PC-9 (cell line): ENCODE measurements at regions of chr13 and their contacts with region 1.

Region 1: GRCh38 chr13:96958286-96958891 is 35.9 kb downstream of the OXGR1 start:
- DNase-seq: no peak
- H3K4me3 ChIP-seq: no peak overlapping the region
- H3K27ac ChIP-seq: no peak overlapping the region
- H3K4me1 ChIP-seq: no peaks in the 10 kb centered on the region
- H3K27me3 ChIP-seq: no peaks in the 10 kb centered on the region; the same call in 1 of the 2 replicates
- CTCF ChIP-seq: peak; percentile 86

Region 2: GRCh38 chr13:95246292-95247082 is 1711.9 kb before region 1 on chr13:
- CTCF ChIA-PET with region 1: interaction called, 17 read pairs
- POLR2A ChIA-PET with region 1: no interaction called
- intact Hi-C with region 1: no loop called
- DNase-seq: peak; percentile 47 to 95
- H3K4me3 ChIP-seq: no peak overlapping the region
- H3K27ac ChIP-seq: no peak overlapping the region
- H3K4me1 ChIP-seq: peaks cover 29% of the 10 kb centered on the region
- H3K27me3 ChIP-seq: no peaks in the 10 kb centered on the region
- CTCF ChIP-seq: no peak

Region 3: GRCh38 chr13:96020155-96020575 is 938.2 kb before region 1 on chr13:
- CTCF ChIA-PET with region 1: no interaction called
- POLR2A ChIA-PET with region 1: no interaction called
- intact Hi-C with region 1: loop called (anchors 5 kb)
- DNase-seq: peak; percentile 19 to 59
- H3K4me3 ChIP-seq: no peak overlapping the region
- H3K27ac ChIP-seq: no peak overlapping the region
- H3K4me1 ChIP-seq: no peaks in the 10 kb centered on the region
- H3K27me3 ChIP-seq: no peaks in the 10 kb centered on the region
- CTCF ChIP-seq: peak; percentile 86

Region 4: GRCh38 chr13:96636001-96636709 is 322.2 kb before region 1 on chr13:
- CTCF ChIA-PET with region 1: no interaction called
- POLR2A ChIA-PET with region 1: no interaction called
- intact Hi-C with region 1: no loop called
- DNase-seq: no peak
- H3K4me3 ChIP-seq: no peak overlapping the region
- H3K27ac ChIP-seq: no peak overlapping the region
- H3K4me1 ChIP-seq: no peaks in the 10 kb centered on the region
- H3K27me3 ChIP-seq: no peaks in the 10 kb centered on the region
- CTCF ChIP-seq: no peak

Region 5: DNA sequence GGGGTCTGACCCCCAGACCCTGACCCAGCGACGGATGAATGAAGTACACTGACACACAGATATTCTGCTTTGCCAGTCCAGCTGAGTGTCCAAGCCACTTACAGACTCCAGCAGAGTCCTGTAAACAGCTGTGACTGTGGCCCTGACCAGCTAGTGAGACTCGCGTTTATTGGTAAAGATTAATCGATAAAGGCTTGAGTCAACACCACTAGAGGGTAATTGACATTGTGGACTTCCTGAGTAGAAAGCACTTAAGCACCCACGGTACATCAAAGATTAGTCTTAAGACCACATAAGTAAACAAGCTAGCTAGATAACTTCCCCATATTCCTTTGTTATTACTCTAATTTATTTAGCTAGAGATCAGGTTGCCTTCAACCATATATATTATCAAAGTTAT is 110.1 kb before region 1 on chr13:
- CTCF ChIA-PET with region 1: interaction called, 20 read pairs
- POLR2A ChIA-PET with region 1: no interaction called
- intact Hi-C with region 1: no loop called
- DNase-seq: no peak
- H3K4me3 ChIP-seq: no peak overlapping the region
- H3K27ac ChIP-seq: no peak overlapping the region
- H3K4me1 ChIP-seq: no peaks in the 10 kb centered on the region
- H3K27me3 ChIP-seq: peaks cover 26% of the 10 kb centered on the region
- CTCF ChIP-seq: no peak

Region 6: DNA sequence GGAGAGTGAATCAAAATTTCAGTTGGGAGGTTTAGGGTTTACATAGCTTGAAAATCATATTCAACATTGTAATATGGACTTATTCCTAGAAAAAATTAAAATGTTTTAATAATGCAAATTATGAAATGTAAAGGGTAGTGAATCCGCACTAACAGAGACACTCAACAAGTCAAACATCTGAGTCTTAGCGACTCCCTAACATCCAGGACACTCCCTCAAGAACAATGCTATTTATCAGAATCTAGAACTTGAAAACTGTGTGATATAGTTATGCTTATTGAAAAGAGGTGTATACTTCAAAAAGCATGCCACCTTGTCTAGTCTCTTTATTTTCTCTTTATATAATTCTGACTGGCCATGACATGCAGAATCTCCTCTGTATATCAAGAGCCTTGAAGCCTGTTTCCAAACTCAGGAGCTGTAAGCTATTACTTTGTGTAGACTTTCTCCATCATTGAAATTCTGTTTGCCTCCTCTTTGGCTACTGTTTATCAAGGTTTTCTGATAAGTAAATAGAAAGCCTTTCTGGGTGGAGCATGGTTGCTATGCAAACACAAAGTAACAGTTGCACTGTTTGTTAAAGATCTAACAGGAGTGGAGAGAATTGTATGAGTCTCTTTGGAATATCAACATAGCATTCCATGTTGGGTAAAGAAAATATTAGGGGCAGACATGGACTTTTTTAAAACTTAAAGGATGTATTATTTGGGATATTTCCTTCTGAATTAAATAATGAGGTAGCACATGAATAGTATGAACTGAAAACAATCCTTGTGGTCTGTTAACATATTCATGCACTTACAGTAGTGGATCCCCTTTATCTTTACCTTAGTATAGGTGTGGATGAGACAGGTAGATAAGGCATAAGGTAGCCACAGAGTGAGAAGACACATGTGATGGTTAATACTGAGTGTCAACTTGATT is 207.4 kb after region 1 on chr13:
- CTCF ChIA-PET with region 1: no interaction called
- POLR2A ChIA-PET with region 1: no interaction called
- intact Hi-C with region 1: no loop called
- DNase-seq: peak in 1 of 2 experiments; percentile 47
- H3K4me3 ChIP-seq: no peak overlapping the region
- H3K27ac ChIP-seq: no peak overlapping the region
- H3K4me1 ChIP-seq: peaks cover 8% of the 10 kb centered on the region
- H3K27me3 ChIP-seq: no peaks in the 10 kb centered on the region
- CTCF ChIP-seq: no peak